ENCODE measurements at regions of chr22 and their contacts with region 1.

Region 1: DNA sequence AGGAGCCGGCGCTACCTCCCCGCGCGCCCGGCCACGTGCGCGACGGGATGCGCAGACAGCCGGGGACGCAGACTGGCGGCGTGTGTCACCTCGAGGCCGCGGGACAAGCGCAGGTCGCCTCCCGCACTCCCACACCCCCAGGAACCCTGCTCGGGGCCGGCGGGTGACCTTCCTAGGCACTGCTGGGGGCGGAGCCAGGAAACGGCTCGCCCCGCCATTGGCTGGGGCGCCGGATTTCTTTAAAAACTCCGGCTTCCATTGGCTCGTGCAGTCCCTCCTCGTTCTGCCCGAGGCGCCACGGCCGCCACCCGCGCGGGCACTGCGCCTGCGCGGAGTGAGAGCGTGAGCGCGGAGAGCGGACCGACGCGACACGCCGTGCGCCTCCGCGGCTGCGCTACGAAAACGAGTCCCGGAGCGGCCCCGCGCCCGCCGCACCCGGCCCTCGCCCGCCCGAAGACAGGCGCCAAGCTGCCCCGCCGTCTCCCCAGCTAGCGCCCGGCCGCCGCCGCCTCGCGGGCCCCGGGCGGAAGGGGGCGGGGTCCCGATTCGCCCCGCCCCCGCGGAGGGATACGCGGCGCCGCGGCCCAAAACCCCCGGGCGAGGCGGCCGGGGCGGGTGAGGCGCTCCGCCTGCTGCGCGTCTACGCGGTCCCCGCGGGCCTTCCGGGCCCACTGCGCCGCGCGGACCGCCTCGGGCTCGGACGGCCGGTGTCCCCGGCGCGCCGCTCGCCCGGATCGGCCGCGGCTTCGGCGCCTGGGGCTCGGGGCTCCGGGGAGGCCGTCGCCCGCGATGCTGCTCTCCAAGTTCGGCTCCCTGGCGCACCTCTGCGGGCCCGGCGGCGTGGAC is at the start of gene PIM3:
- DNase-seq: peak; percentile 94
- ATAC-seq: peak; percentile 79
- H3K4me3 Mint-ChIP-seq: peak within 1 kb of the TSS; percentile 93
- H3K27ac Mint-ChIP-seq: peak within 1 kb of the TSS; percentile 93
- H3K4me1 Mint-ChIP-seq: peaks cover 25% of the 10 kb centered on the region
- H3K27me3 Mint-ChIP-seq: no peaks in the 10 kb centered on the region
- total RNA-seq, gene PIM3: 127 to 165 TPM

Region 2: DNA sequence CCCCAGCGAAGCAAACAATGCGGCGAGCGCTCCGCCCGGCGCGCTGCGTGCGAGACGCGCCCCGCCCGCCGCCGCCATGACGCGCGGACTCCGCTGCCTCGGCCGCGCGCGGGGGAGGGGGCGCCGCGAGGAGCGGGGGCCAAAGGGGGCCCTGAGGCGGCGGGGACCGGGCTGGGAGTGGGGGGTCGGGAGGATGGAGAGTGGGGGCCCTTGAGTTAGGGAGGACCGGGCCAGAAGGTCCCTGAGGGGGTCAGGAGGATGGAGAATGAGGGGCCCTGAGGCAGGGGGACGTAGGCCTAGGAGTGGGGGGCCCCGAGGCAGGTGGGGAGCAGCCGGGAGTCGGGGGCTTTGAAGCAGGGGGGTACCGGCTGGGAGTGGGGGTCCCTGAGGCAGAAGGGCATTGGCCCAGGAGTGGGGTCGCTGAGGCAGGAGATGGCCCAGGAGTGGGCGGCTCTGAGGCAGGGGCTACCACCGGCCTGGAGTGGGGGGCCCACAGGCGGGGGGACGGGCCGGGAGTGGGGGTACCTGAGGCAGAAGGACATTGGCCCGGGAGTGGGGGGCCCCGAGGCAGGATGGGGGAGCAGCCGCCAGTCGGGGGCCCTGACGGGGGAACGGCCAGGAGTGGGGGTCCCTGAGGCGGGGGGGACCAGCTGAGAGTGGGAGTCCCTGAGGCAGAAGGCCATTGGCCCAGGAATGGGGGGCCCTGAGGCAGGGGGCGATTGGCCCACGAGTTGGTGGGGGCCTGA is 132.4 kb before region 1 on chr22 and contains the start of gene BRD1:
- CTCF ChIA-PET with region 1: no interaction called
- POLR2A ChIA-PET with region 1: no interaction called
- intact Hi-C with region 1: loop called in 1 of 2 experiments (anchors 1 kb)
- DNase-seq: peak; percentile 73
- ATAC-seq: peak; percentile 68
- H3K4me3 Mint-ChIP-seq: peak within 1 kb of the TSS; percentile 88
- H3K27ac Mint-ChIP-seq: peak within 1 kb of the TSS; percentile 92
- H3K4me1 Mint-ChIP-seq: peaks cover 40% of the 10 kb centered on the region
- H3K27me3 Mint-ChIP-seq: no peaks in the 10 kb centered on the region
- total RNA-seq, gene BRD1: 22.1 to 23.6 TPM

Region 3: DNA sequence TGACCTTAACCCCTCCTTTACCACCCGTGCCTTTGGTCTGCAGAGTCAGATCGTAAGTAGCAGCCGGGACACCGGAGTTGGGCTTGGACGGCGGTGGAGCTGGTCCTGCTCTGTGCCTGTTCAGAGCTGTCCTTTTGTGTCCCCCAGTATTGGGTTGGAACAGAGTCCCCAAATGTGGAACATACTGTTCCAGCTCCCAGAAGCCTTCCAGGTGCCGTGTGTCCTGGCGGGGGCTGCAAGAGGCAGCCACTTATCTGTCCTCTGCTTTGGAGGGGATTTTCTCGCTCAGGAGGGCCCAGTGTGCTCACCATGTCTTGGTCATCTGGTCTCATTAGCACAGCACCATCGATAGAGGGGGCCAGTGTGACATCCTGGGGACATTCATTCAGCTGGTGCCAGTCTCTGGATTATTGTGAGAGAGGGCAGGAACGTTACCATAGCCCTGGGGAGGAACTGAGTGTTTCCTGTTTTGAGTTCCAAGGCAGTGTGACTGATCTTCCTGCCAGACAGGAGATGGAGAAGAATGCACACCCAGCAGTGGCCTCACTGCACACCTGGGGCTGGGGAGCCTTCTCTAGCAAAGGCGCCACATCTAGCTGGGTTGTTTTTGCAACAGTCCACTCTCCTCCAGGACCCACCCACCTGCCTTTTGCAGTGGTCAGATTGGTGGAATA is 29.5 kb before region 1 on chr22:
- CTCF ChIA-PET with region 1: interaction called, 19 read pairs
- POLR2A ChIA-PET with region 1: interaction called, 46 read pairs
- intact Hi-C with region 1: loop called (anchors 1 kb)
- DNase-seq: peak; percentile 77
- ATAC-seq: peak; percentile 47
- H3K4me3 Mint-ChIP-seq: peak overlapping the region; percentile 22
- H3K27ac Mint-ChIP-seq: peak overlapping the region; percentile 34
- H3K4me1 Mint-ChIP-seq: peaks cover 43% of the 10 kb centered on the region
- H3K27me3 Mint-ChIP-seq: no peaks in the 10 kb centered on the region

Region 4: GRCh38 chr22:49979587-49980264 is 19.3 kb after region 1 on chr22:
- CTCF ChIA-PET with region 1: interaction called, 5 read pairs
- POLR2A ChIA-PET with region 1: no interaction called
- intact Hi-C with region 1: loop called in 1 of 2 experiments (anchors 2 kb)
- DNase-seq: peak; percentile 69
- ATAC-seq: peak; percentile 13
- H3K4me3 Mint-ChIP-seq: peak overlapping the region; percentile 15
- H3K27ac Mint-ChIP-seq: peak overlapping the region; percentile 83
- H3K4me1 Mint-ChIP-seq: peaks cover 46% of the 10 kb centered on the region
- H3K27me3 Mint-ChIP-seq: peaks cover 7% of the 10 kb centered on the region

Region 5: DNA sequence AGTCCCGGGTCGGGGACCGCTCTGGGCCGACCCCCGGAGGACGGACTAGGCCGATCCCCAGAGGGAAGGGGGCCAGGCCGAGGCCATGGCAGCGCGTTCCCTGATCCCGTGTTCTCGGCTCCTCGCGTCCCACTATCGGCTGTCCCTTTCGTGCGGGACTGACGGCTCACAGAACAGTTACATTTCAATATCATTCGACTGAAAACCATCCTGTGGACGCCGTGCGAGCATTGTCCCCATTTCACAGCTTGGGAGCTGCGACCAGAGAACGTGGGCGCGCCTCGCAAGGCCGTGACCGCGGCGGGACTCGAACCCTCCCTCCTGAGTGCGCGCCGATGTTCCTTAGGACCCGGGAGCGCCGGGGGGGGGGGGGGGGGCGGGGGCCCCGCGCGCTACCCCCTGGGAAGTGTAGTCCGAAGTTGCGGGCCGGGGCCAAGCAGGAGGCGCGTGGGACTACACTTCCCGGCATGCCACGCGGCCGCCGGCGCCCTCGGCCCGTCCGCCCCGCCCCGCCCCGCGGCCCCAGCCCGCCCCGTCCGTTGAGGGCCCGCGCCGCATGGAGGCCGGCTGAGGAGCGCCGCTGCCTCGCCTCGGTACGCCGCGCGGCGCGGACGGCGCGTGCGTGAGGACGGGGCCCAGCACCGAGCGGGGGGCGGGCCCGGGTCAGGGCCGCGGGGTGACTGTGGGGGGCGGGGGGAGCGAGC is 225.2 kb after region 1 on chr22 and contains the start of gene TRABD:
- CTCF ChIA-PET with region 1: no interaction called
- POLR2A ChIA-PET with region 1: no interaction called
- intact Hi-C with region 1: loop called (anchors 1 to 2 kb)
- DNase-seq: peak; percentile 95
- ATAC-seq: peak; percentile 80
- H3K4me3 Mint-ChIP-seq: peak within 1 kb of the TSS; percentile 84
- H3K27ac Mint-ChIP-seq: peak within 1 kb of the TSS; percentile 92
- H3K4me1 Mint-ChIP-seq: peaks cover 27% of the 10 kb centered on the region
- H3K27me3 Mint-ChIP-seq: no peaks in the 10 kb centered on the region
- total RNA-seq, gene TRABD: 60.7 to 74.5 TPM

Region 6: GRCh38 chr22:50341977-50342650 is 381.7 kb after region 1 on chr22:
- CTCF ChIA-PET with region 1: no interaction called
- POLR2A ChIA-PET with region 1: no interaction called
- intact Hi-C with region 1: loop called in 1 of 2 experiments (anchors 5 kb)
- DNase-seq: peak; percentile 95
- ATAC-seq: peak; percentile 64
- H3K4me3 Mint-ChIP-seq: peak overlapping the region; percentile 71
- H3K27ac Mint-ChIP-seq: peak overlapping the region; percentile 83
- H3K4me1 Mint-ChIP-seq: peaks cover 7% of the 10 kb centered on the region
- H3K27me3 Mint-ChIP-seq: no peaks in the 10 kb centered on the region

Region 7: GRCh38 chr22:50544078-50544745 is 583.8 kb after region 1 on chr22:
- CTCF ChIA-PET with region 1: no interaction called
- POLR2A ChIA-PET with region 1: no interaction called
- intact Hi-C with region 1: loop called in 1 of 2 experiments (anchors 5 kb)
- DNase-seq: peak; percentile 94
- ATAC-seq: peak; percentile 49
- H3K4me3 Mint-ChIP-seq: peak overlapping the region; percentile 35
- H3K27ac Mint-ChIP-seq: peak overlapping the region; percentile 78
- H3K4me1 Mint-ChIP-seq: peaks cover 61% of the 10 kb centered on the region
- H3K27me3 Mint-ChIP-seq: no peaks in the 10 kb centered on the region

Measured in activated CD4-positive, alpha-beta T cell treated with anti-CD3 and anti-CD28 coated beads for 36 hours (primary cell).